ENCODE measurements at regions of chr3 and their contacts with region 1.

Region 1: GRCh38 chr3:149969940-149970715 is 567 bp downstream of the PFN2 start:
- DNase-seq: peak; percentile 86 to 91 (median 89)
- ATAC-seq: peak; percentile 80 to 83
- H3K4me3 ChIP-seq: peak overlapping the region; percentile 75
- H3K27ac ChIP-seq: peak overlapping the region; percentile 94
- H3K4me1 ChIP-seq: no peaks in the 10 kb centered on the region
- H3K27me3 ChIP-seq: no peaks in the 10 kb centered on the region

Region 2: GRCh38 chr3:149792452-149793270 is 177.5 kb before region 1 on chr3 and contains the start of gene ANKUB1:
- intact Hi-C with region 1: no loop called
- DNase-seq: no peak
- ATAC-seq: no peak
- H3K4me3 ChIP-seq: no peak within 1 kb of the TSS
- H3K27ac ChIP-seq: no peak within 1 kb of the TSS
- H3K4me1 ChIP-seq: no peaks in the 10 kb centered on the region
- H3K27me3 ChIP-seq: no peaks in the 10 kb centered on the region
- total RNA-seq, gene ANKUB1: not detected

Region 3: GRCh38 chr3:149816986-149817385 is 153.1 kb before region 1 on chr3:
- intact Hi-C with region 1: no loop called
- DNase-seq: no peak
- ATAC-seq: no peak
- H3K4me3 ChIP-seq: no peak overlapping the region
- H3K27ac ChIP-seq: no peak overlapping the region
- H3K4me1 ChIP-seq: peaks cover 4% of the 10 kb centered on the region
- H3K27me3 ChIP-seq: no peaks in the 10 kb centered on the region

Region 4: DNA sequence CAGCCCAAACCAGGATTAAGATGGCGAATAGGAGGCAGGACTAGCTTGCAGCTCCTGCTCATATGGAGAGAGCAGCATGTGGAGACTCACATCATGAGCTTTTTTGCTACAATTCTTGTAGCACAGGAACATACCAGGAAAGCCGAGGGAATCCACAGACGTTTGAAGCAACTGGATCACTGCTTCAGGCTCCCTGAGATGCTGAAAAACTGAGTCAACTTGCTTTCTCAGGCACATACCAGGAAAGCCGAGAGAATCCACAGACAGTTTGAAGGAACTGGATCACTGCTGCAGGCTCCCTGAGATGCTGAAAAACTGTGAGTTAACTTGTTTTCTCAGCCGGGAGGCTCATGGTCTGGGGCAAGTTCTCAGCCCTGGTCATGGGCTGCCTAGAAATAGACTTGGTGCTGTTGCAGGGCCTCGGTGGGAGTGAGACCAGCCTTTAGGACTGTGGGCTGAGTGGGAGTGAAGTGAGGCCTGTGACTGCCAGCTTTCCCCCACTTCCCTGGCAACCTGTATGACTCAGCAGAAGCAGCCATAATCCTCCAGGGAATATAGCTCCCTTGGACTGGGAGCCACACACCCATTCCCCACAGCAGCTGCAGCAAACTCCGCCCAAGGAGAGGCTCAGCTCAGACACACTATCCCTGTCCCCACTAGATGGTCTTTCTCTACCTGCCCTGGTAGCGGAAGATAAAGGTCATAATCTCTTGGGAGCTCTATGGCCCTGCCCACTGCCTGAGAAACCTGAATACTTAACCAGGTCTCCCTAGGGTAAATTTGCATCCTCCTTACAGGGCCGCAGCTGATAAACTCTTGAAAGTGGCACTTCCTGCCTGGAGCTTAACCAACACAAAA is 52.5 kb after region 1 on chr3:
- intact Hi-C with region 1: no loop called
- DNase-seq: no peak
- ATAC-seq: no peak
- H3K4me3 ChIP-seq: no peak overlapping the region
- H3K27ac ChIP-seq: no peak overlapping the region
- H3K4me1 ChIP-seq: no peaks in the 10 kb centered on the region
- H3K27me3 ChIP-seq: no peaks in the 10 kb centered on the region

Region 5: GRCh38 chr3:150183678-150184425 is 213.7 kb after region 1 on chr3:
- intact Hi-C with region 1: loop called (anchors 2 to 5 kb)
- DNase-seq: peak; percentile 74 to 84 (median 84)
- ATAC-seq: peak; percentile 96
- H3K4me3 ChIP-seq: peak overlapping the region; percentile 62
- H3K27ac ChIP-seq: peak overlapping the region; percentile 51
- H3K4me1 ChIP-seq: no peaks in the 10 kb centered on the region
- H3K27me3 ChIP-seq: no peaks in the 10 kb centered on the region

Region 6: GRCh38 chr3:150216041-150216811 is 246.1 kb after region 1 on chr3:
- intact Hi-C with region 1: loop called in 1 of 4 experiments (anchors 10 kb)
- DNase-seq: peak; percentile 69 to 87 (median 86)
- ATAC-seq: peak; percentile 95 to 96
- H3K4me3 ChIP-seq: no peak overlapping the region
- H3K27ac ChIP-seq: peak overlapping the region; percentile 56
- H3K4me1 ChIP-seq: peaks cover 4% of the 10 kb centered on the region
- H3K27me3 ChIP-seq: no peaks in the 10 kb centered on the region